ENCODE measurements at regions of chr6 and their contacts with region 1.

Region 1: GRCh38 chr6:111764238-111765175 is 108.7 kb downstream of the FYN start:
- DNase-seq: peak; percentile 80
- H3K4me3 Mint-ChIP-seq: peak overlapping the region; percentile 59
- H3K27ac Mint-ChIP-seq: peak overlapping the region; percentile 95
- H3K4me1 Mint-ChIP-seq: peaks cover 98% of the 10 kb centered on the region
- H3K27me3 Mint-ChIP-seq: no peaks in the 10 kb centered on the region

Region 2: DNA sequence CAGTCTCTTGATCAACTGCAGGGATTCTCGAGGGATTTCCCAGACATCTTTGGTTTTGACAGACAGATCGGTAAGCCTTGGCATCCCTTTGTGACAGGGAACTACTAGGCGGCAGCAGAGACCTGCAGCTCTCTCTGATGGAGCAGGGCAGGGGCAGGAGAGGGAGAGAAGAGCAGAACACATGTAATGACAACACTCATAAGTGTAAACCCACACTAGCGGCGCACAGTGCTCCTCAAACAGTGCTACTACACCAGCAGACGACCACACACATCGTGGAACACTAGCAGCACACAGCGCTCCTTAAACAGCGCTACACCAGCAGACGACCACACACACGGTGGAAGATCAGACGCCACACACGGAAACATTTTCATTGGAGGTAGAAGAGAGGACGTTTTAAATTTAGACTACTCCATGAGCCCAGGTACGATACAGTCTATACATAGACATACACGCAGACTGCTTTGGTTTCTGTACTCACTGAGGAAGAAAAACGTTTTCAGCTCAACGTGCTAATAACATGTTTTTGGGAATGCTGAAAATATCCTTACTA is 64.3 kb before region 1 on chr6:
- CTCF ChIA-PET with region 1: no interaction called
- POLR2A ChIA-PET with region 1: no interaction called
- intact Hi-C with region 1: no loop called
- DNase-seq: no peak
- H3K4me3 Mint-ChIP-seq: no peak overlapping the region
- H3K27ac Mint-ChIP-seq: peak overlapping the region; percentile 40
- H3K4me1 Mint-ChIP-seq: peaks cover 36% of the 10 kb centered on the region
- H3K27me3 Mint-ChIP-seq: no peaks in the 10 kb centered on the region

Region 3: GRCh38 chr6:111715321-111715720 is 49.2 kb before region 1 on chr6:
- CTCF ChIA-PET with region 1: interaction called, 15 read pairs
- POLR2A ChIA-PET with region 1: interaction called, 4 read pairs
- intact Hi-C with region 1: loop called (anchors 1 kb)
- DNase-seq: peak; percentile 70
- H3K4me3 Mint-ChIP-seq: no peak overlapping the region
- H3K27ac Mint-ChIP-seq: peak overlapping the region; percentile 83
- H3K4me1 Mint-ChIP-seq: peaks cover 90% of the 10 kb centered on the region
- H3K27me3 Mint-ChIP-seq: no peaks in the 10 kb centered on the region

Region 4: GRCh38 chr6:111793711-111794111 is 29.2 kb after region 1 on chr6:
- CTCF ChIA-PET with region 1: interaction called, 3 read pairs
- POLR2A ChIA-PET with region 1: interaction called, 4 read pairs
- intact Hi-C with region 1: loop called (anchors 1 kb)
- DNase-seq: peak; percentile 75
- H3K4me3 Mint-ChIP-seq: peak overlapping the region; percentile 78
- H3K27ac Mint-ChIP-seq: peak overlapping the region; percentile 93
- H3K4me1 Mint-ChIP-seq: peaks cover 77% of the 10 kb centered on the region
- H3K27me3 Mint-ChIP-seq: no peaks in the 10 kb centered on the region

Region 5: DNA sequence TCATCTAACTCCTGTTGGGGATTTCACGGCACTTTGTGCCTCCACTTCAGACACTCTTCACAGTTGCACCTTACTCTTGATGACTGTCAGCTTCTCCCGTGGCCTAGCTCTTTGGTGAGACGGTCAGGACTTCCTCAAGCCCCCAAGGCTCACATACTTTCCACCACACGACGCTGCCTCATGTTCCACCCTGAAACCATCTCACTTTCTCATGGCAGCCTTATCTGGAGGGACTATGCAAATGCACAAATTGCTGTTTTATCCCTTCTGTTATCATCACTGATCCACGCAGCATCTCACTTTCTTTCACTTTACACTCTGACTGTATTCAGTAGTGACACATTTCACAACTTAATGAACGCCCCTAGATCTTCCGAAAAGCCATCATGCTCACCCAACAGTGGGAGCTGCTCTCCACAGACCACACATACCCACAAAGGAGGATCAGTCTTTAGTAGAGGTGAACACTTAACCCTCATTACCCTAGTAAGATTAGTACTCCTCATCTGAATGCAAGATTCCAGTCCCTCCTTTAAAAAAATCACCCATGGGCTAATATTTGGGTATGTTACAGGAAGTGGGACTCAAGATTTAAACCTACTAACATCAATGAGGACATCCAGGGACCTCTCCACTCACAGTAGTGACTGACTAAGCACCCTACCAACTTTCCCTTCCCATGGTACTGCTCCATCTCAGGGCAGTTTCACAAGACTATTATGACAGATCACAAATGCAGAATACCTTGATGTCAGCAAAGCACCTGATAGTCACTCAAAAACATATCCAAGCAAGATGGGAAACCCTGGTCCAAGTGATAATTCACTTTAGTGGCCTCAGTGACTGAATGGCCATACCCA is 73.4 kb after region 1 on chr6:
- CTCF ChIA-PET with region 1: no interaction called
- POLR2A ChIA-PET with region 1: interaction called, 13 read pairs
- intact Hi-C with region 1: loop called (anchors 1 kb)
- DNase-seq: peak; percentile 77
- H3K4me3 Mint-ChIP-seq: peak overlapping the region; percentile 54
- H3K27ac Mint-ChIP-seq: peak overlapping the region; percentile 91
- H3K4me1 Mint-ChIP-seq: peaks cover 37% of the 10 kb centered on the region
- H3K27me3 Mint-ChIP-seq: no peaks in the 10 kb centered on the region

Region 6: GRCh38 chr6:111873178-111874024 is 108.9 kb after region 1 on chr6 and contains the start of gene FYN:
- CTCF ChIA-PET with region 1: interaction called, 4 read pairs
- POLR2A ChIA-PET with region 1: interaction called, 27 read pairs
- intact Hi-C with region 1: loop called (anchors 1 kb)
- DNase-seq: peak; percentile 99
- H3K4me3 Mint-ChIP-seq: peak within 1 kb of the TSS; percentile 98
- H3K27ac Mint-ChIP-seq: peak within 1 kb of the TSS; percentile 96
- H3K4me1 Mint-ChIP-seq: peaks cover 30% of the 10 kb centered on the region
- H3K27me3 Mint-ChIP-seq: no peaks in the 10 kb centered on the region
- total RNA-seq, gene FYN: 353 to 365 TPM

Region 7: DNA sequence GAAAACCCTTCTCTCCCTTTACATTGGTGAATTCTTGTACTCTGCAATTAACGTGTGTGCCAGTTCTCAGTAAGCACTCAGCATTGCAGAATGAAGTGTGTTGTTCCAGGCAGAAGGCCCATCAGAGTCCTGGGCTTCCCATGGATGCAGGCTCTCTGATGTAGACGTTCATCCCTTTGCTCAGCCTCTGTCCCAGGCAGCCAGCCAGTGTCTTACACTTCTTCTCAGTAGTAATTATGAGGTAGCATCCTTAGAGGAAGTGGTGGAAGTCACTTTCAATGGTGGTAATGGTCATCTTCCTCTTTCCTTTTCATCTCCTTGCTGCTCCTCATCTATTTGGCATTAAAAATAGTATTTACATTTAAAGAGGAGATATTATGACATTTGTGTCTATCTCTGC is 175.4 kb after region 1 on chr6:
- CTCF ChIA-PET with region 1: no interaction called
- POLR2A ChIA-PET with region 1: no interaction called
- intact Hi-C with region 1: no loop called
- DNase-seq: no peak
- H3K4me3 Mint-ChIP-seq: no peak overlapping the region
- H3K27ac Mint-ChIP-seq: no peak overlapping the region
- H3K4me1 Mint-ChIP-seq: no peaks in the 10 kb centered on the region
- H3K27me3 Mint-ChIP-seq: no peaks in the 10 kb centered on the region

Region 8: DNA sequence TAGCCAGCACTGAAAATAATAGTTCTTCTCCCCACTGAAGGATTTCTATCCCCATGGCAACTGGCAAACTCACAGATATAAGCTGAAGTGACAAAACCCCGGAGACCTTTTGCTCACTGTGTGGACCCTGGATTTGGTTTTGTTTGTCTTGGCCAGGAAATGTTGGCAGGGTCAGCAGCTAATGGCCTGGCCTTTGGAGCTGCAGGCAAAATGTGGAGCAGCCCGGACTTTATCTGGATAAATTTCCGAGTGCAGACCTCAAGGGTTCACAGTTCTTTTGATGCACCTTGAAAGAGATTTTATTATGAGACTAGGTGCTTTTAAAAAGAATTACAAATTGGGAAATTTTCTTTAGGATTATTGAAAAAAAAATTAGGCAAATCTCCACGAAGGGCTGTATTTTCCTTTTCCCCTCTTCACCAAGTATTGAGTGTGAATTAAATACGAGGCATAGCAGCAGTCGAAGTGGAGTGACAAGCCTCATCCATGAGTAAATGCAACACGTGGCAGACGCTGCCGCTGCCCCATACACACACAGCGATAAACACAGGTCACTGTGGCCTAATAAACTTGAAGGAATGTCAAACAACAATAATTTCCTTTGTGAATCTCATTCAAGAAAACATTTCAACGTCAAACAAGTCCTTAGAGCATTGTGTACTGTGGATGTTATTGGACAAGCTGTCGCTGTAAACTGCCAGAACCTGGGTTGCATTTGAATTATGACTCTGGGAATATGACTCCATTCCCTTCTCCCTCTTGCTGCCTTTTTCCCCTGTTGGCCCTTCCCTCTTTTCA is 254.3 kb after region 1 on chr6:
- CTCF ChIA-PET with region 1: interaction called, 3 read pairs
- POLR2A ChIA-PET with region 1: interaction called, 7 read pairs
- intact Hi-C with region 1: loop called (anchors 2 kb)
- DNase-seq: no peak
- H3K4me3 Mint-ChIP-seq: peak overlapping the region; percentile 3
- H3K27ac Mint-ChIP-seq: peak overlapping the region; percentile 90
- H3K4me1 Mint-ChIP-seq: peaks cover 56% of the 10 kb centered on the region
- H3K27me3 Mint-ChIP-seq: no peaks in the 10 kb centered on the region

Measured in activated CD4-positive, alpha-beta memory T cell treated with anti-CD3 and anti-CD28 coated beads for 36 hours (primary cell).